ENCODE measurements at regions of chr12 and their contacts with region 1.

Region 1: DNA sequence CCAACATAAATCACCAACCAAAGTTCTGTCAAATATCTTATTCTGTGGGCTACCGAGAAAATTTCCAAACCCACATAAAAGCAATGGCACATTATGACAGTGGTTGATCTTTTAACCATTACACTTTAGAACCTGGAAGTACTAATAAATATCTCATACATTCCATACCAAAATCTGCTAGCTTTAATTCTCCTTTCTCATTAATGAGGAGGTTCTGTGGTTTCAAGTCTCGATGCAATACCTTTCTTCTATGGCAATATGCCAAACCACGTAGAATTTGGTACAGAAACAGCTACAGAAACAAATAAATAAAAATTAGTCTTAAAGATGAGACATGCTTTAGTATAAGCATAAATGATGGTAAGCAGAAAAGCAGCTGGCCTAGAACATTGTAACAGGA is 100.7 kb downstream of the ELK3 start:
- DNase-seq: peak; percentile 27 to 56 (median 45)
- H3K4me3 ChIP-seq: no peak overlapping the region
- H3K4me3 Mint-ChIP-seq: peak overlapping the region in 5 of 8 donors; percentile 16 to 73 (median 27)
- H3K27ac ChIP-seq: no peak overlapping the region
- H3K27ac Mint-ChIP-seq: peak overlapping the region in 2 of 7 donors; percentile 25 to 77
- H3K4me1 ChIP-seq: peaks cover 15% of the 10 kb centered on the region
- H3K4me1 Mint-ChIP-seq: peaks cover 18 to 25% (median 19%) of the 10 kb centered on the region in 4 donors
- H3K27me3 ChIP-seq: no peaks in the 10 kb centered on the region
- H3K27me3 Mint-ChIP-seq: no peaks in the 10 kb centered on the region

Region 2: GRCh38 chr12:96314723-96315122 is 19.9 kb after region 1 on chr12:
- CTCF ChIA-PET with region 1: no interaction called
- POLR2A ChIA-PET with region 1: interaction called, 4 read pairs
- intact Hi-C with region 1: loop called (anchors 2 kb)
- DNase-seq: no peak
- H3K4me3 ChIP-seq: no peak overlapping the region
- H3K4me3 Mint-ChIP-seq: peak overlapping the region in 3 of 8 donors; percentile 29 to 57 (median 31)
- H3K27ac ChIP-seq: no peak overlapping the region
- H3K27ac Mint-ChIP-seq: peak overlapping the region in 6 of 7 donors; percentile 24 to 85 (median 46)
- H3K4me1 ChIP-seq: peaks cover 25% of the 10 kb centered on the region
- H3K4me1 Mint-ChIP-seq: peaks cover 7 to 22% (median 14%) of the 10 kb centered on the region in 4 donors
- H3K27me3 ChIP-seq: no peaks in the 10 kb centered on the region
- H3K27me3 Mint-ChIP-seq: no peaks in the 10 kb centered on the region